Ascending aorta (tissue), 2 donors: ENCODE measurements at regions of chr2 and their contacts with region 1.

Region 1: GRCh38 chr2:118013724-118014491 is at the start of gene CCDC93:
- DNase-seq: peak; percentile 24 to 82
- H3K4me3 ChIP-seq: peak within 1 kb of the TSS; percentile 75 to 93
- H3K27ac ChIP-seq: peak within 1 kb of the TSS; percentile 79 to 90
- H3K4me1 ChIP-seq: peaks cover 3 to 4% of the 10 kb centered on the region in 2 donors
- H3K27me3 ChIP-seq: no peaks in the 10 kb centered on the region
- CTCF ChIP-seq: no peak
- total RNA-seq, gene CCDC93: 6.3 TPM

Region 2: GRCh38 chr2:117703858-117704257 is 310.1 kb before region 1 on chr2:
- intact Hi-C with region 1: no loop called
- DNase-seq: no peak
- H3K4me3 ChIP-seq: no peak overlapping the region
- H3K27ac ChIP-seq: no peak overlapping the region
- H3K4me1 ChIP-seq: no peaks in the 10 kb centered on the region
- H3K27me3 ChIP-seq: no peaks in the 10 kb centered on the region
- CTCF ChIP-seq: no peak

Region 3: DNA sequence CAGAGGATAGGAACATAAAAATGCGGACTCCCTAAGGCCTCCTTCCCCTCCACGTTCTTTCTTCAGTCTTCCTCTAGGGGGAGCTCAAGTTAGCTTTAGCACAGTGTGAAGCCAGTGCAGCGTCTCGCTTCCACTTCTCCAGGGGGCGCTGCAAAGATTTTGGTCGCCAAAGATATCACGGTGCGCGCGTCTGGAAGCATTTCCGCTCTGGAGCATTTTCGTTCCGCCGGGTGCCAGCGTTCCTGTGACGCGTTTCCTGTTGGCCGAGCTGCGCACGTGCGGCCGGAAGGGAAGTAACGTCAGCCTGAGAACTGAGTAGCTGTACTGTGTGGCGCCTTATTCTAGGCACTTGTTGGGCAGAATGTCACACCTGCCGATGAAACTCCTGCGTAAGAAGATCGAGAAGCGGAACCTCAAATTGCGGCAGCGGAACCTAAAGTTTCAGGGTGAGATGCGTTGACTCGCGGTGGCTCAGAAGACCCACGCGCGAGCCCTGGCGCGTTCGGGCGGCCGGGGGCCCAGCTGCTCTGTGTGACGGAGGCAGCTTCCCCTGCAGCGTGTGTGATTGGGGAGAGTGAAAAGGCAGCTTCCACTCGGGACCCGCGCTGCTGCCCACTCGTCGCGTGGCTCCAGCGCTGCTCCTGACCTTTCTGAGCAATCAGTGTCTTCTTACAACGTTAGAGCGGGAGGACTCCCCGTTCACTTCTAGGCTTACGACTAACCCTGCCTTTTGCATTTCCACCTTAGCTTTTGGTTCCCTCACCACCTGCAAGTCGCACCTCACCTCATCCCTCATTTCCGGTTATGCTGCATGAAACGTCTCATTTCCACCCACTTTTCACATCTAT is 199.3 kb before region 1 on chr2 and contains the start of gene DDX18:
- intact Hi-C with region 1: loop called (anchors 5 kb)
- DNase-seq: peak; percentile 88 to 99
- H3K4me3 ChIP-seq: peak within 1 kb of the TSS; percentile 82 to 97
- H3K27ac ChIP-seq: peak within 1 kb of the TSS; percentile 93 to 94
- H3K4me1 ChIP-seq: peaks cover 4 to 18% of the 10 kb centered on the region in 2 donors
- H3K27me3 ChIP-seq: no peaks in the 10 kb centered on the region
- CTCF ChIP-seq: peak; percentile 91 to 99 (median 98)
- total RNA-seq, gene DDX18: 20.5 TPM

Region 4: GRCh38 chr2:119862127-119862889 is 1848.4 kb after region 1 on chr2:
- intact Hi-C with region 1: no loop called
- DNase-seq: no peak
- H3K4me3 ChIP-seq: no peak overlapping the region
- H3K27ac ChIP-seq: no peak overlapping the region
- H3K4me1 ChIP-seq: no peaks in the 10 kb centered on the region
- H3K27me3 ChIP-seq: no peaks in the 10 kb centered on the region
- CTCF ChIP-seq: no peak